Naive thymus-derived CD4-positive, alpha-beta T cell (primary cell): ENCODE measurements at regions of chr1 and their contacts with region 1.

Region 1: GRCh38 chr1:48831120-48831978 is 54.7 kb upstream of the BEND5 start:
- DNase-seq: no peak
- ATAC-seq: no peak
- H3K4me3 ChIP-seq: no peak overlapping the region
- H3K4me3 Mint-ChIP-seq: no peak overlapping the region
- H3K27ac ChIP-seq: no peak overlapping the region
- H3K27ac Mint-ChIP-seq: no peak overlapping the region
- H3K4me1 ChIP-seq: no peaks in the 10 kb centered on the region
- H3K4me1 Mint-ChIP-seq: no peaks in the 10 kb centered on the region
- H3K27me3 ChIP-seq: no peaks in the 10 kb centered on the region
- H3K27me3 Mint-ChIP-seq: peaks cover 20 to 34% (median 34%) of the 10 kb centered on the region in 5 donors

Region 2: DNA sequence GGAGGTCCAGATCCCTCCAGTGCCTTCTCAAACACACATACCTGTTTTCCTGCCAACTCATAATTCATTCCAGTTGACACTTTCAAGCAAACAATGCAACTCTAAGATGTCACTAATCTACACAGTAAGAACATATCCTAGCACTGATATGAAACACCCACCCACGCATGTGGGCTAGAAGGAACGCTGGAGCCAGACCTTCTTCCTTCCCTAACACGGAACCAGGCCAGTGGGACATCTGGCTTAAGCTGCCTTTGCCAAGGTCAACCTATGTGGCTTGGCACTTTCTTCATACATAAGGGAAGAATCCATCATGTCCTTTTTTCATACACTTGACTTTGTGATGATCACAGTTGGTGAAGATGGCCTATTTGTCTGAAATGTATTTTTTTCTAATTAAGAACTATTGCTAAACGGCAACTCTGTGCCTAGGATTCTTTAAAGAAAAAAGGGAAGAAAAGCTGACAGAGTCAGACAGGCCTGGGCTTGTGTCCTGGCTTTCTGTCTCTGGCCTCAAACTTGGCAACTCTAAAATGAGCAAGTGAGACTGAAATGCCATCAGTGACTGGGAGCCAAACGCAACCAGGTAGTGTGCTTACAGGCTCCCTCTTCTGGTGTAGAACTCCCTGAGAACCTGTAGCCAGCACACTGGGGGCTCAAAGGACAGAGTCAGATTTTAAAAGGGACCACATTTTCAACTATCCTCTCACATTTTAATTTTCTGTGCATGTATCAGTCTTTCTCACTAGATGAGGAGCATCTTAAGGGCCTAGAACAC is 38.0 kb after region 1 on chr1:
- CTCF ChIA-PET with region 1: no interaction called
- POLR2A ChIA-PET with region 1: no interaction called
- intact Hi-C with region 1: loop called in 1 of 2 experiments (anchors 5 kb)
- DNase-seq: no peak
- ATAC-seq: no peak
- H3K4me3 ChIP-seq: no peak overlapping the region
- H3K4me3 Mint-ChIP-seq: no peak overlapping the region
- H3K27ac ChIP-seq: no peak overlapping the region
- H3K27ac Mint-ChIP-seq: no peak overlapping the region
- H3K4me1 ChIP-seq: no peaks in the 10 kb centered on the region
- H3K4me1 Mint-ChIP-seq: no peaks in the 10 kb centered on the region
- H3K27me3 ChIP-seq: no peaks in the 10 kb centered on the region
- H3K27me3 Mint-ChIP-seq: peaks cover 0 to 31% (median 10%) of the 10 kb centered on the region in 5 donors

Region 3: DNA sequence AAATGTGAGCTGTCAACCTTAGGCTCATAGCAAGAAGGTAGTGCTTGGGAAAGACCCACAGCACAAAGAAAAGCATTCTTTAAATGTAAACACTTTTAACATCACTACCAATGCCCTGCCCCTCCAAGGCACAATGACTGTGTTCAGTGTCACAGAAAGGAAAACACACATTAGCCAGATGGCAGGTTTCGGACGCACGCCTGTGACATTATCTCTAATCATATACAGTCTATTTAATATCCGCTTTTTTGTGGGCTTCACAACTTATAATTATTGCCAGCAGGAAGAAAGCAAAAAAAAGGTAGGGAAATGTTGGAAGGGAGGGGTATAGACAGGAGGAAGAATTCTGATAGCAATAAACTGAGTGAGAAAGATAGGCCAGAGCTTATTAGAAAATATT is 57.7 kb after region 1 on chr1:
- CTCF ChIA-PET with region 1: no interaction called
- POLR2A ChIA-PET with region 1: no interaction called
- intact Hi-C with region 1: no loop called
- DNase-seq: no peak
- ATAC-seq: no peak
- H3K4me3 ChIP-seq: no peak overlapping the region
- H3K4me3 Mint-ChIP-seq: no peak overlapping the region
- H3K27ac ChIP-seq: no peak overlapping the region
- H3K27ac Mint-ChIP-seq: no peak overlapping the region
- H3K4me1 ChIP-seq: no peaks in the 10 kb centered on the region
- H3K4me1 Mint-ChIP-seq: no peaks in the 10 kb centered on the region
- H3K27me3 ChIP-seq: no peaks in the 10 kb centered on the region
- H3K27me3 Mint-ChIP-seq: peaks cover 5 to 22% (median 11%) of the 10 kb centered on the region in 5 donors